ENCODE measurements at regions of chr19 and their contacts with region 1.

Region 1: DNA sequence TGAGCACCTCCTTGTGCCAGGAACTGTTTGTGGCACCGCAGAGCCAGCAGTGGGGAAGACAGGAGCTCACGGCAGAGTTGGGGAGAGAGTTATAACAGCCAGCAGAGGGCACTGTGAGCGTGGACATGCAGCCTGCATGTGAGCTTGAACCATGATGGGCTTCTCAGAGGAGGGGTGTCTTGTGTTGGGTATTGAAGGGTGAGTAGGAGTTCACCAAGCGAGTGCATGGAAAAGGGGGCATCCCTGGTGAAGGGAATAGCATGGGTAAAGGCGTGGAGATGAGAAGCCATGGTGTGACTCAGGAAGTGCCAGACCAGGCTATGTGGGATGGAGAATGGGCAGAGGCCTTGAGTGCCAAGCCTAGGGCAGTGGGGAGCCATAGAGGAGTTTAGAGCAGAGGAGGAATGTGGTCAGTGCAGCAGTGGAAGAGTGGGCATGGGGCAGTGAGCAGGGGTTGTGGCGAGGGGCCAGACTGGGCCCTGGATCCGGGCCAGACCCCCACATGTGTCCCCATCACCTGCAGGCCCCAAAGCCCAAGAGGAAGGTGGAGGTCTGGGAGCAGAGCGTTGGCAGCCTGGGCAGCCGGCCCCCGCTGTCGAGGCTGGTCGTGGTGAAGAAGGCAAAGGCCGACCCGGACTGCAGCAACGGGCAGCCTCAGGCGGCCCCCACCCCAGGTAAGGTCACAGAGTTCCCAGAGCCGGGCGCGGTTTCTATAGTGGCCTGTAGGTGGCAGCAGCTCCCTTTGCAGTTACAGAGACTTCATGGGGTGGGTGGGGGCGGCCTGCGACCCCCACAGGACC is 11.8 kb upstream of the SHD start:
- DNase-seq: peak; percentile 62 to 70
- H3K4me3 ChIP-seq: no peak overlapping the region
- H3K4me3 Mint-ChIP-seq: no peak overlapping the region
- H3K27ac Mint-ChIP-seq: no peak overlapping the region
- H3K4me1 ChIP-seq: no peaks in the 10 kb centered on the region
- H3K4me1 Mint-ChIP-seq: no peaks in the 10 kb centered on the region
- H3K27me3 ChIP-seq: no peaks in the 10 kb centered on the region
- H3K27me3 Mint-ChIP-seq: no peaks in the 10 kb centered on the region
- CTCF ChIP-seq: peak; percentile 81 to 95

Region 2: DNA sequence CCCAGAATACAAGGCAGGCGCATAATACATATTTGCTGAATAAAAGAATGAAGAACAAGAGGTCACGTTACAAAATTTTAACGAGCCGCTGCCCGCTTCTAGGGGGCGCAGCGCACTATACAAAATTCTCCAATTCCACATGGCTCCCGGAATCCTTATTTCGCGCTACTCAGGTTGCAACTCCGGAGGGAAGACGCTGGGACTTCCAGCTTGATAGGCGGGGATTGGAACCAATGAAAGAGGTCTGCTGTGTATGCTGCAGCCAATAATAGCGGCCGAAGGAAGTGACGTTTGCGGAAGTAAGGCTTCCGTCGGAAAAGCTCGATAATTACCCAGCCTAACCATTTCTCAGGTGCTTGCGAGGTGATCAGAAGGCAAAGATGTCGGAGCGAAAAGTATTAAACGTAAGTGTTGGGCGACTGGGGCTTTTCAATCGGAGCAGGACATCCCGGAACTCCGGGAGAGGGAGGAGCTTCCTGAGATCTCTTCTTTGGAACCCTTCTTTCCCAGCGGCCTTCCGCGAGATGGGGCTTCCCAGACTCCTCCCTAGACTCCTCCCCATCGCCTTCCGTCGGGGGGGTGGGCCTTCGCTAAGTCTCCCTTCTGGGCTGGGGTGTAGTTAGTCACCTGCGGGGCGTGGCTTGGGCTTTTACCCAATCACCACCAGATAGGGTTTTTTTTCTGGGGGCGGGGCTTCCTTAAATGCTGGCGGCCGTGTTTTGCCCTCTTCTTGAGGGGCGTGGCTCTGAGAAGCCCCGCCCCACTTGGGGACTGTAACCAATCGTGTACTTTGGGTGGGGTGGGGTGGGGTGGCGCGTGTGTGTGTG is 20.3 kb before region 1 on chr19 and contains the start of gene YJU2:
- CTCF ChIA-PET with region 1: interaction called, 16 read pairs
- POLR2A ChIA-PET with region 1: no interaction called
- intact Hi-C with region 1: no loop called
- DNase-seq: peak; percentile 99
- H3K4me3 ChIP-seq: peak within 1 kb of the TSS; percentile 52
- H3K4me3 Mint-ChIP-seq: peak within 1 kb of the TSS; percentile 96
- H3K27ac Mint-ChIP-seq: peak within 1 kb of the TSS; percentile 100
- H3K4me1 ChIP-seq: 0 out of 2 replicates have a peak, but pooled peaks cover 5% of the 10 kb centered on the region
- H3K4me1 Mint-ChIP-seq: peaks cover 7% of the 10 kb centered on the region
- H3K27me3 ChIP-seq: no peaks in the 10 kb centered on the region
- H3K27me3 Mint-ChIP-seq: no peaks in the 10 kb centered on the region
- CTCF ChIP-seq: peak in 1 of 2 experiments; percentile 54
- total RNA-seq, gene YJU2: 19.5 TPM in 2 replicates

Region 3: GRCh38 chr19:4278419-4279266 is 11.3 kb after region 1 on chr19 and contains the start of gene SHD:
- CTCF ChIA-PET with region 1: interaction called, 11 read pairs
- POLR2A ChIA-PET with region 1: no interaction called
- intact Hi-C with region 1: no loop called
- DNase-seq: no peak
- H3K4me3 ChIP-seq: peak within 1 kb of the TSS; percentile 42
- H3K4me3 Mint-ChIP-seq: peak within 1 kb of the TSS; percentile 85
- H3K27ac Mint-ChIP-seq: no peak within 1 kb of the TSS
- H3K4me1 ChIP-seq: peaks cover 3% of the 10 kb centered on the region; the same call in 1 of the 2 replicates
- H3K4me1 Mint-ChIP-seq: peaks cover 7% of the 10 kb centered on the region
- H3K27me3 ChIP-seq: no peaks in the 10 kb centered on the region
- H3K27me3 Mint-ChIP-seq: peaks cover 7% of the 10 kb centered on the region
- CTCF ChIP-seq: no peak
- total RNA-seq, gene SHD: 1.4 and 3.5 TPM in 2 replicates

Region 4: GRCh38 chr19:4284176-4284958 is 17.1 kb after region 1 on chr19:
- CTCF ChIA-PET with region 1: interaction called, 10 read pairs
- POLR2A ChIA-PET with region 1: no interaction called
- intact Hi-C with region 1: no loop called
- DNase-seq: peak; percentile 88 to 94
- H3K4me3 ChIP-seq: peak overlapping the region; percentile 36
- H3K4me3 Mint-ChIP-seq: peak overlapping the region; percentile 66
- H3K27ac Mint-ChIP-seq: peak overlapping the region; percentile 59
- H3K4me1 ChIP-seq: peaks cover 16% of the 10 kb centered on the region
- H3K4me1 Mint-ChIP-seq: peaks cover 14% of the 10 kb centered on the region
- H3K27me3 ChIP-seq: no peaks in the 10 kb centered on the region
- H3K27me3 Mint-ChIP-seq: peaks cover 4% of the 10 kb centered on the region
- CTCF ChIP-seq: no peak

Region 5: DNA sequence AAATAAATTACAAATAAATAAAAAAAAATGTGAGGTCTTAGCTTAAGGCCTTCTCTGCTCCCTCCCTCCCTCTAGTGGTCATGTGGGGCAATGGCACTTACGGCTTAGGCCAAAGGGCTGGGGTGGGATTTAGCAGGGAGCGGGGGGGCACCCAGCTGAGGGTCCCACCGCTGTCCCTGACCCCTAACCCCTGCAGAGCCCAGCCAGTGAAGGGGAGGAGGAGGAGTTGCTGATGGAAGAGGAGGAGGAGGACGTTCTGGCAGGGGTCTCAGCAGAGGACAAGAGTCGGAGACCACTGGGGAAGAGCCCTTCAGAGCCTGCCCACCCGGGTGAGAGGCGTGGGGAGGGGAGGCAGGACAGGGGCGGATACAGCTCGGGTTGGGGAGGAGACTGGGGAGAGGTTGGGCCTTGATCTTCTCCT is 85.4 kb after region 1 on chr19:
- CTCF ChIA-PET with region 1: interaction called, 34 read pairs
- POLR2A ChIA-PET with region 1: no interaction called
- intact Hi-C with region 1: loop called (anchors 1 kb)
- DNase-seq: peak in 1 of 2 experiments; percentile 64
- H3K4me3 ChIP-seq: no peak overlapping the region
- H3K4me3 Mint-ChIP-seq: no peak overlapping the region
- H3K27ac Mint-ChIP-seq: no peak overlapping the region
- H3K4me1 ChIP-seq: no peaks in the 10 kb centered on the region
- H3K4me1 Mint-ChIP-seq: no peaks in the 10 kb centered on the region
- H3K27me3 ChIP-seq: no peaks in the 10 kb centered on the region
- H3K27me3 Mint-ChIP-seq: no peaks in the 10 kb centered on the region
- CTCF ChIP-seq: peak; percentile 83 to 84